Transverse colon (tissue), 4 donors: ENCODE measurements at regions of chr11 and their contacts with region 1.

Region 1: DNA sequence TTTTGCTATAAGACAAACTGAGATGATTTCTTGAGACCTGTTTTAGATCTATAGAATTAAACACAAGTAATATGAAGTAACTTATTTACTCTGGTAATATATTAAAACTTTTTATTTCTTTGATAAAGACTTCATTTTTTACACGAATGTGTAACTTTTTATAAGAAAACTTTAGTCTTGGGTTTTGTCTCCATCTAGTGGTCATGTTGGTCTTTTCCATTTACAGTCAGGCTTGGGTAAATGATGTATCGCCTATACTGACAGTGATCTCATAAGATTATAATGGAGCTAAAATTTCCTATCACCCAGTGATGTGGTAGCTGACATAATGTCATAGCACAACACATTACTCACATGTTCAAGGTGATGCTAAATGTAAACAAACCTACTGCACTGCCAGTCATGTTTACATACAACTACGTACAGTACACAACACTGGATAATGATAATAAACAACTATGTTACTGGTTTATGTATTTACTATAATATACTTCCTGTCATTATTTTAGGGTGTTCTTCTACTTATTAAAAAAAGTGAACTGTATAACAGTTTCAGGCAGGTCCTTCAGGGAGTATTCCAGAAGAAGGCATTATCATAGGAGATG is 7.5 kb upstream of the C11orf97 start:
- DNase-seq: no peak
- H3K4me3 ChIP-seq: no peak overlapping the region
- H3K27ac ChIP-seq: no peak overlapping the region
- H3K4me1 ChIP-seq: peaks cover 0 to 2% (median 0%) of the 10 kb centered on the region in 4 donors
- H3K27me3 ChIP-seq: no peaks in the 10 kb centered on the region
- CTCF ChIP-seq: peak; percentile 57 to 74 (median 68)
- EP300 ChIP-seq: no peak
- POLR2A ChIP-seq: no peak

Region 2: GRCh38 chr11:94325681-94326080 is 179.1 kb before region 1 on chr11:
- in situ Hi-C with region 1: loop called in 1 of 4 experiments (anchors 10 kb)
- intact Hi-C with region 1: no loop called
- DNase-seq: peak; percentile 48
- H3K4me3 ChIP-seq: no peak overlapping the region
- H3K27ac ChIP-seq: no peak overlapping the region
- H3K4me1 ChIP-seq: no peaks in the 10 kb centered on the region
- H3K27me3 ChIP-seq: no peaks in the 10 kb centered on the region
- CTCF ChIP-seq: peak in 4 of 5 experiments; percentile 22 to 27 (median 26)
- EP300 ChIP-seq: no peak
- POLR2A ChIP-seq: no peak

Region 3: GRCh38 chr11:94563176-94563847 is 58.5 kb after region 1 on chr11:
- in situ Hi-C with region 1: no loop called
- intact Hi-C with region 1: no loop called
- DNase-seq: no peak
- H3K4me3 ChIP-seq: no peak overlapping the region
- H3K27ac ChIP-seq: no peak overlapping the region
- H3K4me1 ChIP-seq: peaks cover 0 to 4% (median 0%) of the 10 kb centered on the region in 4 donors
- H3K27me3 ChIP-seq: no peaks in the 10 kb centered on the region
- CTCF ChIP-seq: no peak
- EP300 ChIP-seq: no peak
- POLR2A ChIP-seq: no peak

Region 4: GRCh38 chr11:95182397-95182796 is 677.6 kb after region 1 on chr11:
- in situ Hi-C with region 1: no loop called
- intact Hi-C with region 1: no loop called
- DNase-seq: no peak
- H3K4me3 ChIP-seq: no peak overlapping the region
- H3K27ac ChIP-seq: no peak overlapping the region
- H3K4me1 ChIP-seq: no peaks in the 10 kb centered on the region
- H3K27me3 ChIP-seq: no peaks in the 10 kb centered on the region
- CTCF ChIP-seq: no peak
- EP300 ChIP-seq: no peak
- POLR2A ChIP-seq: no peak

Region 5: GRCh38 chr11:95912902-95913560 is 1408.2 kb after region 1 on chr11:
- in situ Hi-C with region 1: no loop called
- intact Hi-C with region 1: loop called (anchors 5 kb)
- DNase-seq: no peak
- H3K4me3 ChIP-seq: no peak overlapping the region
- H3K27ac ChIP-seq: no peak overlapping the region
- H3K4me1 ChIP-seq: peaks cover 0 to 4% (median 0%) of the 10 kb centered on the region in 4 donors
- H3K27me3 ChIP-seq: no peaks in the 10 kb centered on the region
- CTCF ChIP-seq: no peak
- EP300 ChIP-seq: no peak
- POLR2A ChIP-seq: no peak